ENCODE measurements at regions of chr6 and their contacts with region 1.

Region 1: GRCh38 chr6:168956884-168957730 is 296.5 kb downstream of the THBS2 start:
- DNase-seq: peak; percentile 42
- H3K4me3 ChIP-seq: no peak overlapping the region
- CTCF ChIP-seq: peak; percentile 81

Region 2: DNA sequence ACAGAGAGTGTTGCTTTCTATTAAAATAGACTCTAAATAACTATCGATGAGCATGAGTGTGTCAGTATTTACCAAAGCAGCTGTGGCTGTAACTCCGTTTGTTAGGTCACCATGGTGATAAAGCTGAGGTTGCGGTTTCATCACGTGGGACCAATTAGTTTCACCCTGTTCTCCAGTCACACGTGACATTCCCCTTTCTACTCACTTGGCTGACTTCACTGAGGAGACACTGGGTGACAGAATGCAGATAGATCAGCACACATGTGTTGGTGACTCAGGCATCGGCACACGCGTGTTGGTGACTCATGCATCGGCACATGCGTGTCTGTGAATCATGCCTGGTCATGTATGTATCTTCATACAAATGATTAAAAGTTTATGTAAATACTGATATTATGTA is 11.1 kb after region 1 on chr6:
- CTCF ChIA-PET with region 1: interaction called, 17 read pairs
- POLR2A ChIA-PET with region 1: no interaction called
- DNase-seq: peak; percentile 81
- H3K4me3 ChIP-seq: no peak overlapping the region
- CTCF ChIP-seq: no peak

Region 3: GRCh38 chr6:169212897-169213813 is 256.0 kb after region 1 on chr6:
- CTCF ChIA-PET with region 1: interaction called, 21 read pairs
- POLR2A ChIA-PET with region 1: no interaction called
- DNase-seq: no peak
- H3K4me3 ChIP-seq: peak overlapping the region; percentile 12; the same call in 1 of the 2 replicates
- CTCF ChIP-seq: peak; percentile 70

Region 4: GRCh38 chr6:169520104-169520503 is 563.0 kb after region 1 on chr6:
- CTCF ChIA-PET with region 1: interaction called, 46 read pairs
- POLR2A ChIA-PET with region 1: no interaction called
- DNase-seq: no peak
- H3K4me3 ChIP-seq: no peak overlapping the region
- CTCF ChIP-seq: peak; percentile 23

Region 5: GRCh38 chr6:169640351-169640852 is 683.3 kb after region 1 on chr6:
- CTCF ChIA-PET with region 1: interaction called, 16 read pairs
- POLR2A ChIA-PET with region 1: no interaction called
- DNase-seq: no peak
- H3K4me3 ChIP-seq: no peak overlapping the region
- CTCF ChIP-seq: peak; percentile 35